Head of caudate nucleus (tissue), 42 donors: ENCODE measurements at regions of chr10 and their contacts with region 1.

Region 1: DNA sequence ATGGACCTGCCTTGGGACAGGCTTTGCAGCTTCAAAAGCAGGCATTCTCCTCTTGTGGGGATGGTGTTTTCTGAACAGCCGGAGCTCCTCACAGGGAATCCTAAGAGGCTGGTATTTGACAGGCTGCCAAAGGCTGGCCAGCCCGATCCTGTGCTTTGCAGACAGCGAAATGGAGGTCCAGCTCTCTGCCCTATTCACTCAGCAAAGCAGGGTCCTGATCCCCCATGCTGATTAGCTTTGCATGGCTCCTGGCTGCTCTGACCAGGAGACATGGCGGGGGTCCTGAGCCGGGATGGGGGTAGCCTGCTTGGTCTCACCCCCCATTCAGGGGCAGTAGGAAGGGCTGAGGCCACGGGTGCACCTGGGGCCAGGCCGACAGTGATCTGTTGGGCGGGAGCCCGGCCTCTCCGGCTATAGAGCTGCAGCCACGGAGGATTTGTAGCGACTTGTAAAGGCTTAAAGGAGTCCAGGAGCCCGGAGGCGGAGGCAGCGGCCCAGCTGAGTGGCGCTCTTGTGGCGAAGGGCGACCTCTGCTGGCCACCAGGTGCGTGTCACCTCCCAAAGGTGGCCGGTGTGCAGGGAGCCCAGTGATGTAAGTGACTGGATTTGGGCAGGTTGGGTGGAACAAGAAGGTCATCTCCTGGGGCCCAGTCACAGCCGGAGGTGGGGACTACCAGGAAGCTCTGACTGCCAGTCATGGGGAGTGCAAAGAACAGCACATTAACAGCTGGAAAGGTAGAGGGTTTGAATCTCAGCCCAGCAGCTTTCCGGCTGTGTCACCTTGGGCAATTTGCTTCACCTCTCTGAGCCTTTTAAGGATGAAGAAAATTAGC is 126.5 kb downstream of the ZMIZ1 start:
- DNase-seq: peak; percentile 77 to 94 (median 85)

Region 2: GRCh38 chr10:78211561-78212051 is 983.7 kb before region 1 on chr10:
- intact Hi-C with region 1: loop called (anchors 10 kb)
- DNase-seq: peak; percentile 31 to 84 (median 68)

Region 3: GRCh38 chr10:78777466-78777865 is 417.8 kb before region 1 on chr10:
- intact Hi-C with region 1: loop called (anchors 10 kb)
- DNase-seq: peak; percentile 63 to 92 (median 79)

Region 4: GRCh38 chr10:78830062-78830975 is 365.0 kb before region 1 on chr10:
- intact Hi-C with region 1: no loop called
- DNase-seq: no peak

Region 5: DNA sequence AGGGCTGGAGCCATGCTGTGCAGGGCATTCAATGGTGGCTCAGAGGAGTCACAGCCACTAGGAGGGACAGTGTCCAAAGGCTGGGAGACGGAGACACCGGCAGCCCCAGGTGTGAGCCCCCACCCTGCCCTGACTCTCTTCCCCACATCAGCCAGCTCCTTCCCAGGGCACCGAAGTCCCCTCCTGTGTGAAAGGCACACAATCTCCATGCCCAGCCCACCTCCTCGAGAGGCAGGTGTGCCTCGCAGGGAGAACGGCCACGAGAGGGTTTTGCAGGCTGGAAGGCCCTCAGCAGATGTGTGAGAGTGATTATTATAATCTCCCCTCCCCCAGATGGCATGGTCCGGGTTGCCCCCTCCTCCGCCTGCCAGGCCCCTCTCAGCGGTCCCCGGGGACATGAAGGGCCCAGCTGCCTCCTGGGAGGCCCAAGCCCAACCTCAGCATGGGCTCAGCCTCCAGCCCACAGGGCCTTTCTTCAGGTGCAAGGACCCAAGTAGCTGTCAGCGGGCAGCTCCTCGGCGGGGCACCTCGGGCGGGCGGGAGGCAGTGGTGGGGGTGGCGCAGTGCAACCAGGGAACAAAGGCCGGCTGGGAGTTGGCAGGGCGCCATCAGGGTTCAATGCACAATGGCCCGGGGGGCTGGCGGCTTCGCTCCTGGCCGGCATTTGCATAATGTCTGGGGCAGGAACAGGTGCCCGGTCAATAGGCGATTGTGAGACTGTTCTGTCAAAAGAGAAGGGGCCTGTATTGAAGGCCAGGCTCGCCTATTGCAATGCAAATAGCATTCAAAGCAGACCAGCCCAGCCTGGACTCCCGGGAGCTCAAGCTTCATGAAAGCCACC is 281.9 kb before region 1 on chr10:
- intact Hi-C with region 1: loop called (anchors 5 kb)
- DNase-seq: peak; percentile 92 to 99 (median 96)

Region 6: GRCh38 chr10:79056736-79057391 is 138.4 kb before region 1 on chr10:
- intact Hi-C with region 1: no loop called
- DNase-seq: peak in 6 of 42 donors; percentile 2 to 11 (median 6)

Region 7: GRCh38 chr10:79068562-79069324 is 126.6 kb before region 1 on chr10 and contains the start of gene ZMIZ1:
- intact Hi-C with region 1: loop called (anchors 5 kb)
- DNase-seq: peak; percentile 80 to 96 (median 88)